ENCODE measurements at regions of chr1 and their contacts with region 1.

Region 1: DNA sequence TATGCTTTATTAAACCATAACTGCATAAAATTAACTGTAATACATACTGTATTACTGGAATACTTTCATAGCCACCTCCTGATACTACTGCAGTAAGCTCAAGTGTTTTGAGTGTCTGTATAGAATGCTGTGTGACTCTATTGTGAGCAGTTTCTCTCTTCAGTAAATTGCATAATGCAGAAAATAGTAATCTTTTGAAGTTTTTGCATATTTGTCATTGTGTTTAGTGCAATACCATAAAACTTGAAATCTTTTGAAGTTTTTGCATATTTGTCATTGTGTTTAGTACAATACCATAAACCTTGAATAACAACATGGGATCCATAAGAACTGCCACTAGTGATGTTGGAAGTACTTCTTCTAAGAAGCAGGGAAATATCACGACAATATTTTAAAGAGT is 11.2 kb downstream of the TPR start:
- DNase-seq: no peak
- ATAC-seq: no peak
- H3K4me3 ChIP-seq: no peak overlapping the region
- H3K4me3 Mint-ChIP-seq: no peak overlapping the region
- H3K27ac ChIP-seq: no peak overlapping the region
- H3K27ac Mint-ChIP-seq: no peak overlapping the region
- H3K4me1 ChIP-seq: no peaks in the 10 kb centered on the region
- H3K4me1 Mint-ChIP-seq: no peaks in the 10 kb centered on the region
- H3K27me3 ChIP-seq: no peaks in the 10 kb centered on the region
- H3K27me3 Mint-ChIP-seq: no peaks in the 10 kb centered on the region
- CTCF ChIP-seq: no peak

Region 2: DNA sequence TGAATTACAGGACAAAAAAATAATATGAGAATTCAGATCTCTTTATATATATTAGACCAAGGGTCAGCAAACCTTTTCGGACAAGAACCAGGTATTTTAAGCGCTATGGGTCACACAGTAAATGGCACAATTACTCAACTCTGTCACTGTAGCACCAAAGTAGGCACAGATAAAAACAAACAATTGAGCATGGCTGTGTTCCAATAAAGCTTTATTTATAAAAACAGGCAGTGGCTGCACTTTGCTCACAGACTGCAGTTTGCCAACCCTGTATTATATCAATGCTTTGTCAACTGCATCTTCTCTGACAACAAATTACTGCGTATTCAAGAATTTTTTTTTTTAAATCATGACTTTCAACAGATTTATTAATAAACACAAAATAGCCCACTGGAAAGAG is 1639.0 kb before region 1 on chr1:
- CTCF ChIA-PET with region 1: no interaction called
- POLR2A ChIA-PET with region 1: no interaction called
- intact Hi-C with region 1: loop called (anchors 10 kb)
- DNase-seq: no peak
- ATAC-seq: no peak
- H3K4me3 ChIP-seq: no peak overlapping the region
- H3K4me3 Mint-ChIP-seq: no peak overlapping the region
- H3K27ac ChIP-seq: no peak overlapping the region
- H3K27ac Mint-ChIP-seq: no peak overlapping the region
- H3K4me1 ChIP-seq: no peaks in the 10 kb centered on the region
- H3K4me1 Mint-ChIP-seq: no peaks in the 10 kb centered on the region
- H3K27me3 ChIP-seq: no peaks in the 10 kb centered on the region
- H3K27me3 Mint-ChIP-seq: no peaks in the 10 kb centered on the region
- CTCF ChIP-seq: no peak

Region 3: DNA sequence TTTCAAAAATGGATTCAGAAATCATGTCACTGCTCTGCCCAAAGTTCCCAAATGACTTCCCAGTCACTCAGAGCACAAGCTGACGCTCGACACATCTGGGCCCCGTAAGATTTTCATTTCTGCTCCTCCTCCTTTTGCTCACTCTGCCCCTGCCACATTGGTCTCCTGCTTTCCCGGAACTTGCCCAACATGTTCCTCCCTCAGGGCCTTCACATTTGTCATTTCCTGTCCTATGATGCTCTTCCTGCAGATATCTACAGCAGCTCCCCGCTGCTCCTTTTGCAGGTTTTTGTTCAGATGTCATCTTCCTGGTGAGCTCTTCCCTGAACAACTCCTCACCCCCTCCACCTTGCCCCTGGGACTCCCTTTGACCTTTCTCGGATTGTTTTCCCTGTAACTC is 988.3 kb before region 1 on chr1:
- CTCF ChIA-PET with region 1: no interaction called
- POLR2A ChIA-PET with region 1: no interaction called
- intact Hi-C with region 1: no loop called
- DNase-seq: no peak
- ATAC-seq: no peak
- H3K4me3 ChIP-seq: no peak overlapping the region
- H3K4me3 Mint-ChIP-seq: no peak overlapping the region
- H3K27ac ChIP-seq: no peak overlapping the region
- H3K27ac Mint-ChIP-seq: no peak overlapping the region
- H3K4me1 ChIP-seq: peaks cover 0 to 3% of the 10 kb centered on the region in 2 donors
- H3K4me1 Mint-ChIP-seq: peaks cover 7% of the 10 kb centered on the region
- H3K27me3 ChIP-seq: no peaks in the 10 kb centered on the region
- H3K27me3 Mint-ChIP-seq: no peaks in the 10 kb centered on the region
- CTCF ChIP-seq: no peak

Region 4: DNA sequence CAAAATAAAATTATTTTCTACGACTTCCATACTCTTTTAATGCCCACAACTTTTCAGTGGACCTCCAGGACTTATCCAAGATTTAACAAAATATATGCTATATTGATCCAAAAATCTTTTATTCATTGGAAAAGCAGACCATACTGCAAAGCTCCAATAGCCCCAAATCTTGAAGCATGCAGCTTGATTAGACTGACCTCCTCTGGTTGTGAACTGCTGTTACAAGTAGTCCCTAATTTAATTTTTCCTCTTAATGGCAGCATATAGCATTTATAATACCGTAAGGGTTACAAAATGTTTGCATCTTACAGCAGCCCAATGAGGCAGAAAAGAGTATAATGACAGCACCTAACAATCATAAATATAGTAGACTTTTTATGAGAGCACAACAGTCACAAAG is 38.7 kb before region 1 on chr1:
- CTCF ChIA-PET with region 1: no interaction called
- POLR2A ChIA-PET with region 1: no interaction called
- intact Hi-C with region 1: loop called (anchors 5 kb)
- DNase-seq: no peak
- ATAC-seq: no peak
- H3K4me3 ChIP-seq: no peak overlapping the region
- H3K4me3 Mint-ChIP-seq: no peak overlapping the region
- H3K27ac ChIP-seq: no peak overlapping the region
- H3K27ac Mint-ChIP-seq: no peak overlapping the region
- H3K4me1 ChIP-seq: no peaks in the 10 kb centered on the region
- H3K4me1 Mint-ChIP-seq: no peaks in the 10 kb centered on the region
- H3K27me3 ChIP-seq: no peaks in the 10 kb centered on the region
- H3K27me3 Mint-ChIP-seq: no peaks in the 10 kb centered on the region
- CTCF ChIP-seq: no peak